ENCODE measurements at regions of chr2 and their contacts with region 1.

Region 1: DNA sequence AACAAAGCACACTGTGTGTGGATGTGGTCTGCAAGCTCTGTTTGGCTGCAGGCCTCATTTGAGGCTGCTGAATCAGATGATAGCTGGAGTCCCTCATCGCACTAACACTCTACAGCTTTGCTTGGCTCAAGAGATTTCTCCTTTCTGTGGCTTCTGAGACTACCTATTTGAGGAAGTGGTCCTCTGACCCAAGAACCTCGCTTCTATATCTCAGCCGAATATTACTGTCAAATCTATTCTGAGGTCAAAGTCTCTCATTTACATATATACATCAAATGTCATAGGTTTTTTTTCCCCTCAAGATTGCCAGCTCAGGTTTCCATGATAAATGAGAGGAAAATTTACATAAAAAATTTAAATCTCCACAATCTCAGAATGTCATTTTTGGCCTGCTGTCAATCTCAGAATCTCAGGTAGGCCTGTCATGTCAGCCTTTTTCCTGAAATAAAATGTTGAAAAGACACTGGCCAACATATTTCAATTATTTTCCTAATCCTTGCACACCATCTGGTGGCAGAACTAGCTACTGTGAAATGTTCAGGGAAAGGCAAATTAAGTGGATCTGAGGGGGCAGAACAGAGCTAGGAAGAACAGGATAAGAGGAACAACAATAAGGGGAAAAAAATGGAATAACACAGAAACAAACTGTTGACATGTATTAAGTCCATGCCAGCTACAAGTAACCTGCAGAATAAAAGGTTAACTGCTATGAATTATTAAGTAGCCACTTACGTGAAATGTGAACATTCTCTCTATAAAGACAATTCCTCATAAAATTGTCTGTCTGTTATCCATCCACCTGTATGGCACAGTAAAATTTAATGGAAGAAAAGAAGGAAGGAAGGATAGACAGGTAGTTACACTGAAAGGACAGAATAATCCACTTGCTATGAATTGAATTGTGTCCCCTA is 39.3 kb downstream of the AP1S3 start:
- DNase-seq: no peak
- H3K4me3 ChIP-seq: no peak overlapping the region
- H3K27me3 ChIP-seq: no peaks in the 10 kb centered on the region
- CTCF ChIP-seq: peak; percentile 61

Region 2: DNA sequence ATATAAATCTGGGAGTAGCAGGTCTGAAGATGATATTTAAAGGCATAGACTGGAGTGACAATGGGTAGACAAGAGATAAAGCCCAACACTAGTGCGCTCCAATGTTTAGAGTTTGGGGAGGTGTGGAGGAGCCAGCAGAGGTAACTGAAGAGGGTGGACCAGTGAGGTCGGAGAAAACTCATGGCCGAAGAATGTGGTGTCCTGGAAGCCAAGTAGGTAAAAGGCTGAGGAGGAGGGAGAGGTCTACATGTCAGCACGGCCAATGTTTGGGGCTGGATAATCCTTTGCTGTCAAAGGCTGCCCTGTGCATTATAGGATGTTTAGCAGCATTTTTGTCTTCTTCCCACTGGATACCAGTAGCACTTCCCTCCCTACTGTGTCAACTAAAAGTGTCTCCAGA is 824.8 kb before region 1 on chr2:
- CTCF ChIA-PET with region 1: interaction called, 24 read pairs
- POLR2A ChIA-PET with region 1: no interaction called
- DNase-seq: no peak
- H3K4me3 ChIP-seq: no peak overlapping the region
- H3K27me3 ChIP-seq: no peaks in the 10 kb centered on the region
- CTCF ChIP-seq: no peak

Region 3: DNA sequence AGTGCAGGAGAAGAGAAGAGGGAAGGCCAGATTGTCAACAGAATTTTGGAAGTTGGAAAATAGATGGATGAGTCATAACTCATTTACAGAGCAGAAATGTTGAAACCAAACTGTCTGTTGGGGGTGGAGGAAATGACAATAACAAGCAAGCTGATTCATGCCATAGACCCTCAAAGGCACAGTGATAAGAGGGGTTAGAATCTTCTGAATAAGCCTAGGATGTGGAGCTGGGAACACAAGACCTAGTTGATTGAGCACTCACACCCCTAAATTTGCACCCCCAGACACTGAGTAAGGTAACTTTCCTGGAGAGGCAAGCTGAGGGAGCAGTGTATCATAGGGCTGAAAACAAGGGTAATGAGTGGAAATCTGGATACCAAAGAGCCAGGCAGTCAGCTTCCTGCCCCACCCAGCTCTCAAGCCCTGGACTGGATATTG is 337.3 kb before region 1 on chr2:
- CTCF ChIA-PET with region 1: interaction called, 10 read pairs
- POLR2A ChIA-PET with region 1: no interaction called
- DNase-seq: peak; percentile 26
- H3K4me3 ChIP-seq: no peak overlapping the region
- H3K27me3 ChIP-seq: no peaks in the 10 kb centered on the region
- CTCF ChIP-seq: no peak

Region 4: GRCh38 chr2:223674998-223675609 is 123.0 kb before region 1 on chr2:
- CTCF ChIA-PET with region 1: interaction called, 16 read pairs
- POLR2A ChIA-PET with region 1: no interaction called
- DNase-seq: no peak
- H3K4me3 ChIP-seq: no peak overlapping the region
- H3K27me3 ChIP-seq: no peaks in the 10 kb centered on the region
- CTCF ChIP-seq: peak; percentile 70

Region 5: DNA sequence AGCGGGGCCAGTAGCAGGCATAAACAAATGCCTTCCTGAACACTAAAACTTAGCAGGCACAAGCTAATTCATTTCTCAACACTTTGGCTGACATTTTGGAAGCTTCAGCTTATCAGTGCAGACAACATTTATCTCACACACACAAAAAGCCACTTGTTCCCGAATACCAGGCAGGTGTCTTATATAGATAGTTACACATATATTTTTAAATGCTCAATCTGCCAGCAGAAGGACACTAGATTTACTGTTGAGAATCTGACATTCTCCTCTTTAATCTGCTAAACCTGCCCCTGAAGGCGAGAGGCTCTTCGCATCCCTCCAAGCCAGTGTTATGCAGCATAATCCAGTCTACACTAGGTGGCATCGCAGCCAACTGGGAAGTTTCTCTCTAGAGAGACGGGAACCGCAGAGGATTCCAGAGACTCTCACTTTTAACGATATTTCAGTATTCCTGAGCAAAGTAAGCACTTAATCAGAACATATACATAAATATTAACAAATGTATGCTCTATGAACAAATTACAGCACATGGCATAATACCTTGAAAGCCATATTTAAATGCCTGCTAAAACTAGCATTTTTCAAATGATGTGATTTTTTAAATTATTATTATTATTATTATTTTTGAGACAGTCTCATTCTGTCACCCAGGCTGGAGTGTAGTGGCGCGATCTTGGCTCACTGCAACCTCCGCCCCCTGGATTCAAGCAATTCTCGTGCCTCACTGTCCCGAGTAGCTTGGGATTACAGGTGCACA is 105.7 kb before region 1 on chr2:
- CTCF ChIA-PET with region 1: interaction called, 14 read pairs
- POLR2A ChIA-PET with region 1: interaction called, 3 read pairs
- DNase-seq: no peak
- H3K4me3 ChIP-seq: no peak overlapping the region
- H3K27me3 ChIP-seq: no peaks in the 10 kb centered on the region
- CTCF ChIP-seq: peak; percentile 77

Region 6: DNA sequence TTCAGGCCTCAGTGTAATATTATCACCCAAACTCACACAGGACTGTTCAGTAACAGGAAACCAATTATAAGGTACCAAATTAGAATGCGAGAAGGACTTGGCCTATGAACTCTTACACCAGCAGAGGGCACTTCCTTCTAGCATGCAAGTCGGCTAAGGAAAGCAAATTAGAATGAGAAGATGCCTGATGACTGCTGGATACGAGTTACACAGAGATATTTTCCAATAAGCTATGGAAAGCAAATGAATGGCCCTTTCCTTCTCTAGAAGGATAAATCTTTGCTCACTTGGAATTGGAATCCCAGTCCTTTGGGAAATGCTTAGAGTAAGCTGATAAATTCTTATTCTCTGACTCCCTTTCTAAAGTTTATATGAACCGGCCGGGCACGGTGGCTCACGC is 70.5 kb before region 1 on chr2:
- CTCF ChIA-PET with region 1: interaction called, 14 read pairs
- POLR2A ChIA-PET with region 1: no interaction called
- DNase-seq: no peak
- H3K4me3 ChIP-seq: no peak overlapping the region
- H3K27me3 ChIP-seq: no peaks in the 10 kb centered on the region
- CTCF ChIP-seq: peak; percentile 65

Measured in BJ (cell line).